Activated T-helper 1 cell treated with anti-CD3 and anti-CD28 coated beads, Interleukin-12 subunit alpha, Interleukin-12 subunit beta, Interleukin-2, Interleukin-4 antibody, amounts not matched to agents 30 ng/mL and 10 ng/mL and 1 ng/mL, durations not matched to agents 14 hours and 24 hours and 36 hours (primary cell): ENCODE measurements at regions of chr2 and their contacts with region 1.

Region 1: DNA sequence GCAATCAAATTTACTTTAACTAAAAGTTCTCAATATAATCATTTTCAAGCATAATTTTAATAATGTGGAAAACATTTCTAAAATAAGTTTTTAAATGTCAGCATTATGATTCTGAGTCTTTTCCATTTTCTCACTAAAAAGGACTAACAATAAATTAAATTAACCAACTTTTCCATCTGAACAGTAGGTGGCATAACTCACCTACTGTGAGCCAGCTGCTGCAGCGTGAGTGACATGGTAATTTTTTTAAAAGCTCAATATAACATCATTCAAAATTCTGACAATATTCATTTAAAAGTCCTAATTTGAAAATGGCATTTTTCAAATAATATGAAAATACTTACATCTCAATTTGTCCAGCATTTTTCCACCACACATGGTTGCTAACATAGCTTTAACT is 66.5 kb downstream of the DTNB start:
- DNase-seq: no peak
- H3K4me3 Mint-ChIP-seq: no peak overlapping the region
- H3K27ac Mint-ChIP-seq: no peak overlapping the region
- H3K4me1 Mint-ChIP-seq: peaks cover 24% of the 10 kb centered on the region
- H3K27me3 Mint-ChIP-seq: no peaks in the 10 kb centered on the region

Region 2: GRCh38 chr2:25402477-25402876 is 204.4 kb before region 1 on chr2:
- intact Hi-C with region 1: no loop called
- DNase-seq: no peak
- H3K4me3 Mint-ChIP-seq: peak overlapping the region; percentile 41
- H3K27ac Mint-ChIP-seq: peak overlapping the region; percentile 45
- H3K4me1 Mint-ChIP-seq: peaks cover 24% of the 10 kb centered on the region
- H3K27me3 Mint-ChIP-seq: no peaks in the 10 kb centered on the region

Region 3: DNA sequence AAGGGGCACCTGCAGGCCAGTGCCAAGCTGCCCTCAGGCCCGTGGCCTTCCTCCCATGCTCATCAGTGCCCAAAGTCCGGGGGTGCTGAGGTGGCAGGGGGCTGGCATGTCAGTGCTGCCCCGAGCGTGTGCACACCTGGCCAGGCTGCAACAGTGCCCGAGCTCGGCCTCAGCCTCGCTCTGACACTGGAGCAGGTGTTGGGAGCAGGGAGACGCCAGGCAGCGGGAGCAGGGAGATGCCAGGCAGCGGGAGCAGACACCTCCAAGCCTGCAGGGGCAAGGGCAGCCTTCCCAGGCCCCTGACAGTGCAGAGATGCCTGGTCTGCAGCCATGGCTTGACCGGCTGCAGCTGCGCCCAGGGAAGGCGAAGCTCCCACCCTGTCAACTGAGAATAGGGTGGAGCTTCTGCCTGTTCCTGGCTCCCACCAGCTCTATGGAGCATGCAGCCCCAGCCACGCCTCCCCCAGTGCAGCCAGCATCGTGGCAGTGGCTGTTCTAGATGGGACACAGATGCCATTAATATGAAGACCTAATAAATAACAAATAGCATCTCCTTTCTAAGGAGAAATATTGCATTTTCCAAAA is 15.9 kb before region 1 on chr2:
- intact Hi-C with region 1: no loop called
- DNase-seq: no peak
- H3K4me3 Mint-ChIP-seq: no peak overlapping the region
- H3K27ac Mint-ChIP-seq: no peak overlapping the region
- H3K4me1 Mint-ChIP-seq: peaks cover 46% of the 10 kb centered on the region
- H3K27me3 Mint-ChIP-seq: no peaks in the 10 kb centered on the region

Region 4: DNA sequence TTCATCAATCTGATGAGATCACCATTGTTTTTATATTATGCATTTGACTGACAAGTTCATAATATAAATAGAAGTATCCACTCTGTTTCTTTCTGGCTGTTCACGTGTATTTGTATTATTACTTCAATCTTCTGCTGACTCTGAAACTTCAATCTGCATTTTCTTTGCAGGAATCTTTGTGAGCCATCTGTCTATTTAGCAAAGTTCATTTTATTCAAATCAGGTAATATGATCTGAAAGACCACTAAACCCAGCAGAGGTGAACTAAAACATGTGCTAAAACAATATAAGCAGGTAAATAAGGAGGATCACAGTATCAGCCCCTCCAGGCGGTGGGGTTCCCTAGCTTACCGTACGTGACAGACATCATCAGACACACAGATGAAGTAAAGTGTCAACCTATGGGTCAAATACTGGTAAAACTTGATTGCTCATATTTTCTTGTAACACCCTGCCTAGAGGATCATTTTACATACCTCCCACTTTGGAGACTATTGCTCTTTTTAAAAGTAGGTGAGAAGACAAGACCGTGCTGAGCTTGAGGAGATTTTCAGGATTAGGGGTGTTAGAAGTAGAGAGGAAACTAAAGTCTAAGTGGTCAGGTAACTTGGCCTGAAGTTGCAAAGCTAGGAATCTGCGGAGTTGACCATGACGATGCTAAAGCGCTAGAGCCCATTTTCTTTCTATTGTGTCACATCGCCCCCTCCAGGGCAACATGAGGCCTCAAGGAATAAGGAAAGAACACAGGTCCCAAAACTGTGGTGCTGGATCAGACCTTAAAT is 57.5 kb after region 1 on chr2:
- intact Hi-C with region 1: loop called (anchors 1 kb)
- DNase-seq: no peak
- H3K4me3 Mint-ChIP-seq: no peak overlapping the region
- H3K27ac Mint-ChIP-seq: no peak overlapping the region
- H3K4me1 Mint-ChIP-seq: peaks cover 17% of the 10 kb centered on the region
- H3K27me3 Mint-ChIP-seq: peaks cover 8% of the 10 kb centered on the region

Region 5: DNA sequence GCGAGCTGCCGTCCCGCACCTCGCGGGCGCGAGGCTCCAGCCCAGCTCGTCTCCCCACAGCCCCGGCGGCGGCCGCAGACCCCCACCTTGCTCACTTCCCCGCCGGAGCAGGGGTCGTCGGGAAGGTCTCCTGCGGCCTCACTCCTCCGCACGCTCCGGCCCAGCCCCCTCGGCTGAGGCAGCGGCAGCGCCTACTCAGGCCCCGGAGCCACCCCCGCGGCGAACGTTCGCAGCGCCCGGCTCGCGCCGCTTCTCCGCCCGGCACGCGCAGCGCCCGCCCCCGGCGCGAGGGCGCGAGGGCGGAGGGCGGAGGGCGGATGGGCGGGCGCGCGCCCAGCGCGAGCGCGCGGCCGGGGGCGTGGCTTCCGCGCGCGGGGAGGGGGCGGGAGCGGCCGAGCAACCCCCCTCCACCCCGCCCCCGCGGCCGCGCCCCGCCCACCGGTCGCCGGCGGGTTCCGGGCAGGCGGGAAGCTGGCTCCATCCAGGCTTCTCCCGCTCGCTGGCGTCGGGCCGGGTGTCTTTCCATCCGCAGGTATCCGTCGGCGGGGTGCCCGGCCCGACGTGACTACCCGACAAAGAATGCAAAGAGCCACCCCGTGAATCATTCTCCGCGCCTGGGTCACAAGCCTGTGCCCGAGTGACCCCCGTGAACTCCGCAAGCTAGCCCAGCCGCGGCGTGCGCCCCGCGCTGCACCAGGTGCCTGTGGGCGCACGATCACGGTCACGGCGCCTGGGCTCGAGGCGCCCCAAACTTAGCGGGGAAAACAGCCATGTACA is 66.6 kb after region 1 on chr2 and contains the start of gene DTNB:
- intact Hi-C with region 1: loop called (anchors 2 kb)
- DNase-seq: peak; percentile 75
- H3K4me3 Mint-ChIP-seq: peak within 1 kb of the TSS; percentile 83
- H3K27ac Mint-ChIP-seq: peak within 1 kb of the TSS; percentile 82
- H3K4me1 Mint-ChIP-seq: peaks cover 38% of the 10 kb centered on the region
- H3K27me3 Mint-ChIP-seq: peaks cover 26% of the 10 kb centered on the region
- total RNA-seq, gene DTNB: 28.8 and 28.9 TPM in 2 replicates

Region 6: GRCh38 chr2:25700221-25700660 is 93.3 kb after region 1 on chr2:
- intact Hi-C with region 1: loop called (anchors 1 kb)
- DNase-seq: no peak
- H3K4me3 Mint-ChIP-seq: no peak overlapping the region
- H3K27ac Mint-ChIP-seq: no peak overlapping the region
- H3K4me1 Mint-ChIP-seq: peaks cover 6% of the 10 kb centered on the region
- H3K27me3 Mint-ChIP-seq: no peaks in the 10 kb centered on the region

Region 7: DNA sequence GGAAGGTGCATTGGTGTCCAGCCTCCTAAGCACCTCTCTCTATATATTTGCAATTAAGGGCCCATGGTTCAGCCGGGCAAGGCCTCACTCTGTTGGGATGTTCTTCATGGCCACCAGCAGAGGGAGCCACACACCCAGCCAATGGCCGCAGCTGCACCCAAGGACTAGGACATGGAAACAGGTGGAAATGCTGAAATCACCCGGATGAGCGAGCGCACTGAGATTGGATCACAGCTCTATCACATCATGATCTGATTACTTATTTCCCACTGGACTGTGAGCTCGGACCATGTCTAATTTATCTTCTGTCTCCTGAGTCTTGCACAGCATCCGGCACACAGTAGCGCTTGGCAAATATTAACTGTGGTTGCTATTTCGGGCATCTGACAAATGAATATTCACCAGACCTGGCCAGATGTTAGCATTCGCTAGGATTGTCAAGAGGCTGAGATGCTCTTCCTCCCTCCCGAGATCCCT is 344.2 kb after region 1 on chr2:
- intact Hi-C with region 1: loop called (anchors 2 kb)
- DNase-seq: peak; percentile 50
- H3K4me3 Mint-ChIP-seq: no peak overlapping the region
- H3K27ac Mint-ChIP-seq: peak overlapping the region; percentile 37
- H3K4me1 Mint-ChIP-seq: peaks cover 5% of the 10 kb centered on the region
- H3K27me3 Mint-ChIP-seq: peaks cover 2% of the 10 kb centered on the region

Region 8: DNA sequence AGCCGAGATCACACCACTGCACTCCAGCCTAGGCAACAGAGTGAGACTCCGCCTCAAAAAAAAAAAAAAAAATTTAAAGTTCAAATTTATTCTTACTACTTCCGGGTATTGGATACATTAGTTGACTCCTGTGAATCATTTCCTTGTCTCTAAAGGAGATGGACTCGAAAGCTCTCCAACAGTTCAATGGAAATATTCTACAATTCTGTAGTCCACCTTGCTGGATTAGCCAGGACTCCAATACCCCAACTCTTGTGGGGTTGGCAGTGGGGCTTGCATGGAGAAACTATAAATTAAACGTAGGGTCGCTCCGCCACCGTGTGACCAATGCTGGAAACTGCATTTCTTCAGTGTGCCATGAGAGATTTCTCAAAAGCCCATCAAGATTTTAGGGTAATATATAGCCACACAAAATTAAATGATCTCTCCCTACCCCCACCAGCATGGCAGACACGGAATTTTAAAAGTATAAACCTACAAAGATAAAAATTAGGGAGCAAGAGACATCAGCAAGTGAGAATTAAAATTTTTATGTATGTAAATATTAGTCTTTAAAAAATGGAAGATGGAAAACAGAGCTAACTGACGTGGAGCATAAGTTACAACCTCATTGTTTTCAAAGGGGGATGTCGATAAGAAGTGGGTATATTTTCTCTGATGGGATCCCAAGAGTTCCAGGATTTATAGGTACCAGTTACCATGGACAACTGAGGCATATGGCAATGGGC is 538.2 kb after region 1 on chr2:
- intact Hi-C with region 1: loop called (anchors 1 kb)
- DNase-seq: peak; percentile 43
- H3K4me3 Mint-ChIP-seq: no peak overlapping the region
- H3K27ac Mint-ChIP-seq: no peak overlapping the region
- H3K4me1 Mint-ChIP-seq: no peaks in the 10 kb centered on the region
- H3K27me3 Mint-ChIP-seq: peaks cover 7% of the 10 kb centered on the region